ENCODE measurements at regions of chr2 and their contacts with region 1.

Region 1: DNA sequence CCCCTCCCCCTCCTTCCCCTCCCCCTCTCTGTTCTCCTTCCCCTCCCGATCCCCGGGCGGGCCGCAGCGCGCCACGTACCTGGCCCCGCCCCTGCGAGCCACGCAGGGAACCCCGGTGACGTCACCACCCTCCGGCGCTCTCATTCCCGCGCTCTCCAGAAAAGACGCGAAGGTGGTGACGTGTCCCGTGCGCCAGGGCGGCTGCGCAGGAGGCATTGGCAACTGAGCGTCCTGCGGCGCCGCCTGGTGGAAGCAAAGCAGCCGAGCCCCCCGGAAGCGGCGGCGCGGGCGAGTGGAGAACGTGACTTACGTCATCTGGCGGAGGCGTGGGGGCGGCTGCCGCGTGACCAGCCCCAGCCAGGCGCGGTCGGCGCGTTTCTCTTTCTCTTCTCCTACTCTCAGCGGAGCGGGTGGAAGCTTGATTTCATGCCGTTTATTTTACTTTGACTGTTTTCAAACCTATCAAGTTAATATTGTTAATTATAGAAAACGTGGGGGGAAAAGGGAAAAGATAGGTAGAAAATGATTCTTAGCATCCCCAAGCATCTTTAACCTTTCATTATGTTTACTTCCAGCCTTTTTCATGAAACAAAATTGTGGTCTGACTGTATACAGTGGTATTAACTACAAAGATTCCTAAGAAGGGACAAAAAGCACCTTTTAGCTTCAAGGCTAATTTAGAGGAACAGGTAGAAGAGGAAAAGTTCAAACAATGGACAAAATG is 48.1 kb downstream of the C2orf42 start:
- DNase-seq: peak; percentile 97
- H3K4me3 ChIP-seq: peak overlapping the region; percentile 46
- H3K27ac ChIP-seq: peak overlapping the region; percentile 96
- H3K27me3 ChIP-seq: no peaks in the 10 kb centered on the region
- CTCF ChIP-seq: peak; percentile 82

Region 2: GRCh38 chr2:69914170-69914960 is 228.4 kb before region 1 on chr2:
- in situ Hi-C with region 1: loop called (anchors 25 kb)
- DNase-seq: peak; percentile 100
- H3K4me3 ChIP-seq: peak overlapping the region; percentile 69
- H3K27ac ChIP-seq: peak overlapping the region; percentile 90
- H3K27me3 ChIP-seq: no peaks in the 10 kb centered on the region
- CTCF ChIP-seq: peak; percentile 29

Measured in brain microvascular endothelial cell (primary cell).